ENCODE measurements at regions of chrX and their contacts with region 1.

Region 1: GRCh38 chrX:40153335-40154249 is 55.8 kb upstream of the BCOR start:
- DNase-seq: no peak
- ATAC-seq: peak; percentile 40
- H3K4me3 ChIP-seq: peak overlapping the region; percentile 40; the same call in 1 of the 2 replicates
- H3K27ac ChIP-seq: no peak overlapping the region; the same call in 1 of the 2 replicates
- H3K4me1 ChIP-seq: peaks cover 2% of the 10 kb centered on the region; the same call in 1 of the 2 replicates
- H3K27me3 ChIP-seq: peaks cover 16% of the 10 kb centered on the region; the same call in 1 of the 2 replicates
- CTCF ChIP-seq: 0 out of 2 replicates have a peak, but pooled peaks have one; percentile 14
- POLR2A ChIP-seq: no peak
- RAD21 ChIP-seq: no peak

Region 2: DNA sequence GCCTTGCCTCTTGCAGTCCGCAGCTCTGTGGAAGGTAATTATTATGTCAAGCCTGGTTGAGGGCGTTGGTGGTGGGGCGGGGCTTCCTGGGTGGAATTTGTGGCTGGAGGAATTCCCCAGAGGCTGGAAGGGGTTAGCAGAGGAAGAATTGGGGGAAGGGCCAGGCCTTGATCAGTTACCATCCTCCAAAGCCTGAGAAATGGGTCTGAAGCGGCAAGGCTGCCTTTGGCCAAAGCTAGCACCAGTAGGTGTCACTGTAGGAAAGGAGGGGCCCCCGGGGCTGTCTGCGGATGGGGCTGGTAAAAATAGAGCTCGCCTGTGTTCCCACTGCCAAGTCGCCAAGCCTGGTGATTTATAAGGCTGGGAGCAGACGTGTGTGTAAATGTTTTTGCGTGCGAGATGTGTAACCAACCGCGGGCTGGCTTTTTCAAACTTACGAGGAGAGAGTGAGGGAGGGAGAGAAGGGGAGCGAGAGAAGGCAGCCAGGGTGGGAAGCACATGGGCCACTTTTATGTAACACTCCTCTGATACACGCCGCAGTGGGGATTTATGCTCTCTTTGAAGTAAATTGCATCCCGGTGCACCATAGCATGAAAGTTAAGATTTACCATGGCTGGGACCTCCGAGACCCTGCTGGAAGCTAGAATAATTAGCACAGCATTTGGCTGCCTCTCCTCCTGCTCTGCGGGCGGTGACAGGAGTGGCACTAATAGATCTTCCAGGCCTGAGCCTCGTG is 422.8 kb before region 1 on chrX:
- CTCF ChIA-PET with region 1: no interaction called
- POLR2A ChIA-PET with region 1: no interaction called
- dilution Hi-C with region 1: no loop called
- in situ Hi-C with region 1: no loop called
- intact Hi-C with region 1: loop called (anchors 10 kb)
- DNase-seq: peak; percentile 88
- ATAC-seq: peak; percentile 81
- H3K4me3 ChIP-seq: no peak overlapping the region
- H3K27ac ChIP-seq: no peak overlapping the region
- H3K4me1 ChIP-seq: peaks cover 10% of the 10 kb centered on the region
- H3K27me3 ChIP-seq: peaks cover 21% of the 10 kb centered on the region
- CTCF ChIP-seq: peak; percentile 77
- POLR2A ChIP-seq: peak; percentile 43; the same call in 1 of the 2 replicates
- RAD21 ChIP-seq: peak; percentile 85

Region 3: DNA sequence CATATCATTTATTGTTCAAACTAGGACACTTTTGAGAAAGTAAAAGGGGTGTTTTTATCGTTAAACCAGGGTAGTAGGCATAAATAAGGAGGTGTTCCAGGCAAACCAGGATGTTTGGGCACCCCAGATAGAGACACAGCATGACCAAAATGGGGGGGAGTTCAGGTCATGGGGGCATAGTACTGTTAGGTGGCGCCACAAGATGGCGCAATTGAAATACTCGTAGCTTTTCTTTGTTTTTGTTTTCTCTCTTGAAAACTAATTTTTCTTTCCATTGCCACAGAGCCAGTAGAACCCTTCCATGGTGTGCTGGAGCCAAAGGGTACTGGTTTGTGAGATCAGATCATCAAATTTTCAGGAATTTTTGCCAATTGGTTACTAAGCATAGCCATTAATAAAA is 339.2 kb before region 1 on chrX:
- CTCF ChIA-PET with region 1: no interaction called
- POLR2A ChIA-PET with region 1: no interaction called
- dilution Hi-C with region 1: no loop called
- in situ Hi-C with region 1: no loop called
- intact Hi-C with region 1: loop called (anchors 5 kb)
- DNase-seq: peak; percentile 23
- ATAC-seq: peak; percentile 13; the same call in 1 of the 2 replicates
- H3K4me3 ChIP-seq: no peak overlapping the region
- H3K27ac ChIP-seq: no peak overlapping the region
- H3K4me1 ChIP-seq: peaks cover 3% of the 10 kb centered on the region; the same call in 1 of the 2 replicates
- H3K27me3 ChIP-seq: peaks cover 4% of the 10 kb centered on the region; the same call in 1 of the 2 replicates
- CTCF ChIP-seq: peak; percentile 47
- POLR2A ChIP-seq: no peak
- RAD21 ChIP-seq: peak; percentile 61

Region 4: DNA sequence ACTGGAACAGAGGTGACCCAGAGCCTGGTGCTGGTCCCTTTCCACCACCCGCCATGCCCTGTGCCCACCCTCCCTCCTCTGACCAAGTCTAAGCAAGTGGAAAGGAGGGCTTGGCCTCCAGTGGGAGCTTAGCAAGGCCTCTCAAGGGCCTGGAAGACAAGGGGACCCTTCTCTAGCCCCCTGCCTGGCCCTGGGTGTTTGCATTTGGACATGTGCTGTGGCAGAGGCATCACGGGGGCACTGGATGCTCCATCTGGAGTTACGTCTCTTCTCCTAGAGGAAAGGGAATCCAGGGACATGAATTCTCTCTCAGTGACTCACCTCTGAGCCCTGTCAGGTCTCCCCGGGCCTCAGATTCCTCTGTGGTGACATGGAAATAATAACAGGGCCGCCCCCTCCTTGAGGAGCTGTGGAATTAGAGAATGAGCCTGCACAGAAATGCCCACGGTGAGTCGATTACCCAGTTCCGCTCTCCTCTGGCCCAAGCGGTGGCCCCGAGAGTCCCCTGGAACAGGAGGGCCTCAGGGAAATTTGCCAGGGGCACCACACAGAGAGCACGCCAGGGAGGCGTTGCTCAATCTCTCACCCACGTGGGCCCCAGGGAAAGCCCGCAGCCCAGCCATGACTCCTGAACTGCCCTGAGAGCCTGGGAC is 245.5 kb before region 1 on chrX:
- CTCF ChIA-PET with region 1: no interaction called
- POLR2A ChIA-PET with region 1: no interaction called
- dilution Hi-C with region 1: no loop called
- in situ Hi-C with region 1: no loop called
- intact Hi-C with region 1: loop called (anchors 1 kb)
- DNase-seq: peak; percentile 95
- ATAC-seq: peak; percentile 87
- H3K4me3 ChIP-seq: no peak overlapping the region
- H3K27ac ChIP-seq: peak overlapping the region; percentile 82
- H3K4me1 ChIP-seq: peaks cover 20% of the 10 kb centered on the region
- H3K27me3 ChIP-seq: no peaks in the 10 kb centered on the region
- CTCF ChIP-seq: no peak
- POLR2A ChIP-seq: no peak
- RAD21 ChIP-seq: no peak

Region 5: DNA sequence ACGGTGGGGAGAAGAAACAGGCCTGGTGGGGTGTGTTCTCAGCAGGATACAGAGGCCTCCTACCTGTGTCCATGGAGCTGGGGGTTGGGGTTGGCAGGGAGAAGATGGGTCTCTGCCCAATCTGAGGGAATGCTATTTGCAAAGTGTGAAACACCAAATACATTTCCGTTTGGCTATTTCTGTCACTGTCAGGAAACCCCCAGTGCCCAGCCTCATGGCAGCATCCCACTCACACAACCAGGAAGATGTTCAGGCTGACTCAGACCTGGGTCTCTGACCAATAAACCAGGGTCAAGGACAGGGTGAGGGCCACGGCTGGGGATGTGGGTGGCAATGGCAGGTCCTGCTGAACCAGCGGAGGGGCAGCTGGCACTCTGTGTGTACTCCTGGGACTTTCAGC is 97.2 kb before region 1 on chrX:
- CTCF ChIA-PET with region 1: no interaction called
- POLR2A ChIA-PET with region 1: no interaction called
- dilution Hi-C with region 1: no loop called
- in situ Hi-C with region 1: no loop called
- intact Hi-C with region 1: no loop called
- DNase-seq: no peak
- ATAC-seq: no peak
- H3K4me3 ChIP-seq: no peak overlapping the region
- H3K27ac ChIP-seq: no peak overlapping the region
- H3K4me1 ChIP-seq: no peaks in the 10 kb centered on the region; the same call in 1 of the 2 replicates
- H3K27me3 ChIP-seq: no peaks in the 10 kb centered on the region; the same call in 1 of the 2 replicates
- CTCF ChIP-seq: no peak
- POLR2A ChIP-seq: no peak
- RAD21 ChIP-seq: no peak

Region 6: GRCh38 chrX:40097497-40098263 is 55.9 kb before region 1 on chrX and contains the start of gene BCOR:
- CTCF ChIA-PET with region 1: no interaction called
- POLR2A ChIA-PET with region 1: interaction called, 4 read pairs
- dilution Hi-C with region 1: no loop called
- in situ Hi-C with region 1: no loop called
- intact Hi-C with region 1: loop called (anchors 5 kb)
- DNase-seq: peak; percentile 58
- ATAC-seq: peak; percentile 36
- H3K4me3 ChIP-seq: peak within 1 kb of the TSS; percentile 86
- H3K27ac ChIP-seq: peak within 1 kb of the TSS; percentile 66
- H3K4me1 ChIP-seq: peaks cover 3% of the 10 kb centered on the region
- H3K27me3 ChIP-seq: no peaks in the 10 kb centered on the region; the same call in 1 of the 2 replicates
- CTCF ChIP-seq: no peak
- POLR2A ChIP-seq: peak; percentile 86
- RAD21 ChIP-seq: no peak
- total RNA-seq, gene BCOR: 7.5 and 8.9 TPM in 2 replicates

Region 7: GRCh38 chrX:40108959-40109287 is 44.7 kb before region 1 on chrX:
- CTCF ChIA-PET with region 1: no interaction called
- POLR2A ChIA-PET with region 1: no interaction called
- dilution Hi-C with region 1: no loop called
- in situ Hi-C with region 1: no loop called
- intact Hi-C with region 1: loop called (anchors 2 kb)
- DNase-seq: peak; percentile 76
- ATAC-seq: peak; percentile 65
- H3K4me3 ChIP-seq: peak overlapping the region; percentile 72
- H3K27ac ChIP-seq: peak overlapping the region; percentile 71
- H3K4me1 ChIP-seq: peaks cover 10% of the 10 kb centered on the region
- H3K27me3 ChIP-seq: peaks cover 3% of the 10 kb centered on the region; the same call in 1 of the 2 replicates
- CTCF ChIP-seq: no peak
- POLR2A ChIP-seq: no peak
- RAD21 ChIP-seq: no peak

Measured in IMR-90 (cell line).